ENCODE measurements at regions of chr19 and their contacts with region 1.

Region 1: GRCh38 chr19:7348587-7349230 is at the start of gene ARHGEF18:
- DNase-seq: peak in 4 of 5 donors; percentile 26 to 82 (median 68)
- H3K4me3 ChIP-seq: peak within 1 kb of the TSS; percentile 94
- H3K4me3 Mint-ChIP-seq: peak within 1 kb of the TSS; percentile 95 to 100 (median 99)
- H3K27ac ChIP-seq: peak within 1 kb of the TSS; percentile 61
- H3K27ac Mint-ChIP-seq: peak within 1 kb of the TSS; percentile 94 to 100 (median 97)
- H3K4me1 ChIP-seq: peaks cover 68% of the 10 kb centered on the region
- H3K4me1 Mint-ChIP-seq: peaks cover 53 to 85% (median 68%) of the 10 kb centered on the region in 3 donors
- H3K27me3 ChIP-seq: no peaks in the 10 kb centered on the region
- H3K27me3 Mint-ChIP-seq: no peaks in the 10 kb centered on the region
- total RNA-seq, gene ARHGEF18: 51.0 to 53.3 TPM

Region 2: GRCh38 chr19:6925386-6925785 is 423.3 kb before region 1 on chr19:
- CTCF ChIA-PET with region 1: no interaction called
- POLR2A ChIA-PET with region 1: interaction called, 17 read pairs
- DNase-seq: no peak
- H3K4me3 ChIP-seq: no peak overlapping the region
- H3K4me3 Mint-ChIP-seq: no peak overlapping the region
- H3K27ac ChIP-seq: no peak overlapping the region
- H3K27ac Mint-ChIP-seq: peak overlapping the region in 1 of 8 donors; percentile 81
- H3K4me1 ChIP-seq: peaks cover 8% of the 10 kb centered on the region
- H3K4me1 Mint-ChIP-seq: peaks cover 4 to 15% (median 9%) of the 10 kb centered on the region in 3 donors
- H3K27me3 ChIP-seq: no peaks in the 10 kb centered on the region
- H3K27me3 Mint-ChIP-seq: peaks cover 0 to 7% of the 10 kb centered on the region in 2 donors

Measured in CD8-positive, alpha-beta memory T cell (primary cell).